B cell (primary cell): ENCODE measurements at regions of chr6 and their contacts with region 1.

Region 1: GRCh38 chr6:44172731-44173500 is 14.3 kb downstream of the CAPN11 start:
- DNase-seq: peak; percentile 83
- ATAC-seq: peak; percentile 72
- H3K4me3 ChIP-seq: no peak overlapping the region
- H3K4me3 Mint-ChIP-seq: no peak overlapping the region
- H3K27ac ChIP-seq: no peak overlapping the region
- H3K27ac Mint-ChIP-seq: no peak overlapping the region
- H3K4me1 ChIP-seq: peaks cover 10 to 18% of the 10 kb centered on the region in 2 donors
- H3K4me1 Mint-ChIP-seq: peaks cover 14% of the 10 kb centered on the region
- H3K27me3 ChIP-seq: peaks cover 0 to 18% (median under 1%) of the 10 kb centered on the region in 4 experiments
- H3K27me3 Mint-ChIP-seq: peaks cover 17% of the 10 kb centered on the region
- CTCF ChIP-seq: peak; percentile 83

Region 2: GRCh38 chr6:44116641-44117382 is 56.1 kb before region 1 on chr6:
- CTCF ChIA-PET with region 1: no interaction called
- POLR2A ChIA-PET with region 1: no interaction called
- intact Hi-C with region 1: no loop called
- DNase-seq: no peak
- ATAC-seq: no peak
- H3K4me3 ChIP-seq: no peak overlapping the region
- H3K4me3 Mint-ChIP-seq: no peak overlapping the region
- H3K27ac ChIP-seq: no peak overlapping the region
- H3K27ac Mint-ChIP-seq: no peak overlapping the region
- H3K4me1 ChIP-seq: peaks cover 0 to 4% of the 10 kb centered on the region in 2 donors
- H3K4me1 Mint-ChIP-seq: peaks cover 37% of the 10 kb centered on the region
- H3K27me3 ChIP-seq: no peaks in the 10 kb centered on the region
- H3K27me3 Mint-ChIP-seq: no peaks in the 10 kb centered on the region
- CTCF ChIP-seq: no peak

Region 3: GRCh38 chr6:44246663-44247337 is 73.9 kb after region 1 on chr6 and contains the start of gene HSP90AB1:
- CTCF ChIA-PET with region 1: interaction called, 20 read pairs
- POLR2A ChIA-PET with region 1: no interaction called
- intact Hi-C with region 1: no loop called
- DNase-seq: peak; percentile 99
- ATAC-seq: peak; percentile 74
- H3K4me3 ChIP-seq: peak within 1 kb of the TSS; percentile 85 to 100 (median 98)
- H3K4me3 Mint-ChIP-seq: peak within 1 kb of the TSS; percentile 96
- H3K27ac ChIP-seq: peak within 1 kb of the TSS; percentile 93 to 99
- H3K27ac Mint-ChIP-seq: peak within 1 kb of the TSS; percentile 95
- H3K4me1 ChIP-seq: peaks cover 12 to 30% of the 10 kb centered on the region in 2 donors
- H3K4me1 Mint-ChIP-seq: peaks cover 43% of the 10 kb centered on the region
- H3K27me3 ChIP-seq: no peaks in the 10 kb centered on the region
- H3K27me3 Mint-ChIP-seq: no peaks in the 10 kb centered on the region
- CTCF ChIP-seq: no peak
- total RNA-seq, gene HSP90AB1: 384 and 395 TPM in 2 replicates

Region 4: DNA sequence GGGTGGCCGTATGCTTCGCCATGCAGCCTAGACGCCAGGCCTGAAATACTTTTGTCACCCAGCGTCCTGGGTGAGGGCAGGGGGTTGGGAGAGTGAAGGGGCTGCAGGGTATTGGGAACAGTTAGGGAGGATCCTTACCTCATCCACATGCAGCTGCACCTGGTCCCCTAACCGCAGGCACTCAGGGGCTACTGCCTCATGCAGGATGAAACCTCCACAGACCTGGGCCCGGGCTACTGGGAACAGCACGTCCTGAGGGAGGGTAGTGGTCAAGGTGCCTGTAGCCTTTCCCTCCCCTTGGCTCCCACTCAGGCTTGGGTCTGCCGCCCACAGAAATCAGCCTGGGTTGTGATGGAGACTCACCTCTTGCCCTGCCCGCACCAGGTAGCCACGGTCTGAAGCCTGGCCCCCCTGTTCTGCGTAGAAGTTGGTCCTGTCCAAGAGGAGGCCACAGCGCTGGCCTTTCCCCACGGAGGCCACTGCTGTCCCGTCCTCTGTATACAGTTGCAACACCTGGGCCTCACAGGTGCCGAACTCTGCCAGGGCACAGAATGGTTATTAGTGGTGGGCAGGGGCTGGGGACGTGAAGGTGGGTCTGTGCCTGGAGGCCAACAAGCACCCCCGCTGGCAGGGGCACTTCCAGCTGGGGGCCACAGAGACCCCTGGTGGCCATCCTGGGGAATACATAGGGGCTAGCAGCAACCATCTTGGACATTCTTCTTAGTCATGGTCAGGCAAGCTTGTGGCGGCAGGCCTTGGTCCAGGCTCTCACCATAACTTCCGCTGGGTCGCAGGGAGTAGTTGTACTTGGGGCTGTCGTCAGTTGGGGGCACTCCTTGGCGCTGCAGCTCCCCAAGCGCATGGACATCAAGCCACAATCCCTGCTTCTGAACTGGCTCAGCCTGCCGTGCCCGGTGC is 131.6 kb after region 1 on chr6:
- CTCF ChIA-PET with region 1: interaction called, 23 read pairs
- POLR2A ChIA-PET with region 1: no interaction called
- intact Hi-C with region 1: loop called (anchors 1 kb)
- DNase-seq: peak; percentile 70
- ATAC-seq: peak; percentile 89
- H3K4me3 ChIP-seq: no peak overlapping the region
- H3K4me3 Mint-ChIP-seq: no peak overlapping the region
- H3K27ac ChIP-seq: no peak overlapping the region
- H3K27ac Mint-ChIP-seq: no peak overlapping the region
- H3K4me1 ChIP-seq: no peaks in the 10 kb centered on the region
- H3K4me1 Mint-ChIP-seq: no peaks in the 10 kb centered on the region
- H3K27me3 ChIP-seq: no peaks in the 10 kb centered on the region
- H3K27me3 Mint-ChIP-seq: no peaks in the 10 kb centered on the region
- CTCF ChIP-seq: peak; percentile 84

Region 5: GRCh38 chr6:44338228-44339122 is 165.6 kb after region 1 on chr6:
- CTCF ChIA-PET with region 1: interaction called, 58 read pairs
- POLR2A ChIA-PET with region 1: no interaction called
- intact Hi-C with region 1: no loop called
- DNase-seq: peak; percentile 80
- ATAC-seq: peak; percentile 83
- H3K4me3 ChIP-seq: no peak overlapping the region
- H3K4me3 Mint-ChIP-seq: no peak overlapping the region
- H3K27ac ChIP-seq: no peak overlapping the region
- H3K27ac Mint-ChIP-seq: no peak overlapping the region
- H3K4me1 ChIP-seq: peaks cover 0 to 6% of the 10 kb centered on the region in 2 donors
- H3K4me1 Mint-ChIP-seq: no peaks in the 10 kb centered on the region
- H3K27me3 ChIP-seq: peaks cover 0 to 22% (median 19%) of the 10 kb centered on the region in 4 experiments
- H3K27me3 Mint-ChIP-seq: peaks cover 24% of the 10 kb centered on the region
- CTCF ChIP-seq: peak; percentile 82